ENCODE measurements at regions of chr7 and their contacts with region 1.

Region 1: DNA sequence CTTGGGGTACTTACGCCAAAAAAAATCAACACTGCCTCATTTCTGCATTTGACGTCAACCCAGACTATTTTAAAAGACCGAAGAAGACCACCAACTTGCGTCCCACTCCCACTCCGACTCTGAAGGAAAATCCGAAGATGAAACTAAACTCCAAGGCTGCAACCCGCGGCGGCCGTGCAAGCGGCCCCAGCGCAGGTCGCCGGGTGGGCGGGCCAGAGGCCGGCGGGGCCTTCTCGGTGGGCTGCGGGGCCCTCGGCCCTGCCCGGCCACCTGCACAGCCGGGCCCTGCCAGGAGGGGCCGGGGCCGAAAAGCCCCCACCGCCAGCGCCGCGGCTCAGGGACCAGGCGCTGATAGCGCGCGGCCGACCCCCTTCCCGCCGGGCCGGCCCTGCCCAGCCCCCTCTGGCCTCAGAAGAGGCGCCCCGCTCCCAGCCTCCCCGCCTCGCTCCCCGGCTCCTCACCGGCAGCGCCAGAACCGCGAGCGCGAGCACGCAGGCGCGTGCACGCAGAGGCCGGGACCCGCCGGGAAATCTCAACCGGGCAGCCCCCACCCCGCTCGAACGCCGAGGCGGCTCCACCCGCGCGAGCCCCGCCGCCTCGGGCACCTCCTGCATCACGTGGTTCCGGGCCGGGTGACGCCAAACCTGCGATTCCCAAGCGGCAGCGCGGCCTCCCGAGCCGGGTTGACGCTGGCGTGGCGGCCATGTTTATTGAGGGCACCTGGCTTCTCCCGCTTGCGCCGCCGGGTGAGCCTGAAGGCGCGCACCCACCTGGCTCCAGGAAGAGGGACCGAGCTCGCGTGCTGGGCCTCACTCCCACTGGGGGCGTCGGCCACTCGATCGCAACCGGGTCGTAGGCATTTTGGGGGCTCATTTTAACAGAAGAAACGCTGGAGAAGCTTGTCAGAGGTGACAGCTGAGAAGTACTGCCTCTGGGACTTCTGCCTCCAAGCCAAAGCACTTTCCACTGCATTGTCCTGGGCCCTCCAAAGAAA is at the start of gene C7orf25:
- H3K4me3 Mint-ChIP-seq: peak within 1 kb of the TSS; percentile 91
- H3K27ac Mint-ChIP-seq: peak within 1 kb of the TSS; percentile 82
- H3K4me1 Mint-ChIP-seq: peaks cover 67% of the 10 kb centered on the region
- H3K27me3 Mint-ChIP-seq: no peaks in the 10 kb centered on the region

Region 2: DNA sequence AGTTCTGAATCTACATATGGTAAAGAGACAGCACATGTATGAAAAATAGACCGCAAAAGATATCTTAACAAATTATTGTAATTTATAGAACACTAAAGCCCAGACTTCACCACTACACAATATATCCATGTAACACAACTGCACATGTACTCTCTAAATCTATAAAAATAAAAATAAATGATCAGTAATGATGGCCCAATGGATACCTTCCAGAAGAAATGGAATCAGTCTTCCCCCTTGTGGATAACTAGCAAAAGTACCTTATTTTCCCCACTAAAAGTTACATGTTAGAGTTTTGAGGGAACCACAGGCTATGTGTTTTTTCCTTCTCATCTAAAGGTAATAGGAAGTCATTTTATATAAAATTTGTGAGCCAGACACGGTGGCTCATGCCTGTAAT is 25.6 kb before region 1 on chr7:
- intact Hi-C with region 1: no loop called
- H3K4me3 Mint-ChIP-seq: no peak overlapping the region
- H3K27ac Mint-ChIP-seq: no peak overlapping the region
- H3K4me1 Mint-ChIP-seq: peaks cover 27% of the 10 kb centered on the region
- H3K27me3 Mint-ChIP-seq: no peaks in the 10 kb centered on the region

Region 3: DNA sequence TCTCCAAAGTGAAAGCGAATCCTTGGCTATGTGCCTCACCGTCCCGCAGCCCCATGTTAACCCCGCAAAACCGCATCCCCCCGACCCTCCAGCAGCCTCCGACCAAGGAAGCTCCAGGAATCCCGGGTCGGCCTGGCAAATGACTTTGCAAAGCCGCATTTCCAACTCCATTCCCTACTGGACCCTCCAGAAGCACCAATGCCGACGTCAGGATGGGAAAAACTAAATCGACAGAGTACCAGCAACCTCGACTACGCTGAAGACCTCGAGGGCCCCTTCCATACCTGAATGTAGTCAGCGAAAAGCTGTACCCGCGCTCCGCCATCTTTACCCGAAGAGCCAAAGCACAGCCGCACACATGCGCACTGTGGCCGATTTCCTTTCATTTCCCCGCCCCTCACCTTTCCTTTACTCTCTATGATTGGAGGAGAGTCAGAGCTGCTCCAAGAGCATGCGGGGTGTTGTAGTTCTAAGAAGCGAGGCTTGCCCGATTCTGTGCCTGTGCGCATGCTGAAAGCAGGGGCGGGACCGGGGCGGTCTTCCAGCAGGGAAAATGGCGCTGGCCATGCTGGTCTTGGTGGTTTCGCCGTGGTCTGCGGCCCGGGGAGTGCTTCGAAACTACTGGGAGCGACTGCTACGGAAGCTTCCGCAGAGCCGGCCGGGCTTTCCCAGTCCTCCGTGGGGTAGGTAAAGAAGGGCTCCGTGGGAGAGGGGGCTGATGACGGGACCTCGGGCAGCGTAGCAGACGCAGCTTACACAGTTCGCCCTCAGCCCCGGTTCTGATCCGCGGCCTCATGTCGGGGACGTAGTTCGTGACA is 20.3 kb after region 1 on chr7 and contains the starts of genes MRPL32 and PSMA2:
- intact Hi-C with region 1: loop called (anchors 1 kb)
- H3K4me3 Mint-ChIP-seq: peak within 1 kb of the TSS; percentile 99
- H3K27ac Mint-ChIP-seq: peak within 1 kb of the TSS; percentile 95
- H3K4me1 Mint-ChIP-seq: peaks cover 35% of the 10 kb centered on the region
- H3K27me3 Mint-ChIP-seq: no peaks in the 10 kb centered on the region